ENCODE measurements at regions of chr7 and their contacts with region 1.

Region 1: GRCh38 chr7:102061981-102062390 is 224.7 kb upstream of the SH2B2 start:
- DNase-seq: peak; percentile 57
- ATAC-seq: peak; percentile 94
- H3K4me3 Mint-ChIP-seq: peak overlapping the region; percentile 61
- H3K27ac Mint-ChIP-seq: peak overlapping the region; percentile 81
- H3K4me1 Mint-ChIP-seq: peaks cover 28% of the 10 kb centered on the region
- H3K27me3 Mint-ChIP-seq: no peaks in the 10 kb centered on the region
- CTCF ChIP-seq: no peak

Region 2: DNA sequence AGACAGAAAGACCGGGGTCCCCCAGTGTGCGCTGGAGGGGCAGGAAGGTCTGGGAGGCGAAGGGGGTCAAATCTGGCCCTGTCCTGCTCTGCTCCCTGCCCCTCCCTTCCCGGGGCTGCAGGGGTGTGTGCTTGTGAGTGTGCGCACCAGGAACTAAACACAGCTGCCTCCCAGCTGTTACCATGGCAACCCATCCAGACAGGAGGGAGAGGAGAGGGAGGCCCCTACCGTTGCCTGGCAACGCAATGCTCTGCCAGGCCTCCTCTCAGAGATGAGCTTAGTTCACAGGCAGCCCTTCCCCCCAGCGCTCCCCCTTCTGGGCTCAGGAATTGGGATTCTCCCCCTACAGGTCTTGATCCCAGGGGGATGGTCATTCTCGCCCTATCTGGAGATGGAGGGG is 1572.2 kb before region 1 on chr7:
- CTCF ChIA-PET with region 1: no interaction called
- POLR2A ChIA-PET with region 1: no interaction called
- intact Hi-C with region 1: no loop called
- DNase-seq: no peak
- ATAC-seq: peak; percentile 35
- H3K4me3 Mint-ChIP-seq: no peak overlapping the region
- H3K27ac Mint-ChIP-seq: no peak overlapping the region
- H3K4me1 Mint-ChIP-seq: peaks cover 6% of the 10 kb centered on the region
- H3K27me3 Mint-ChIP-seq: peaks cover 26% of the 10 kb centered on the region
- CTCF ChIP-seq: no peak

Region 3: GRCh38 chr7:101856473-101857357 is 205.3 kb before region 1 on chr7:
- CTCF ChIA-PET with region 1: no interaction called
- POLR2A ChIA-PET with region 1: interaction called, 5 read pairs
- intact Hi-C with region 1: loop called (anchors 1 kb)
- DNase-seq: peak; percentile 76
- ATAC-seq: peak; percentile 86
- H3K4me3 Mint-ChIP-seq: peak overlapping the region; percentile 92
- H3K27ac Mint-ChIP-seq: peak overlapping the region; percentile 98
- H3K4me1 Mint-ChIP-seq: peaks cover 74% of the 10 kb centered on the region
- H3K27me3 Mint-ChIP-seq: no peaks in the 10 kb centered on the region
- CTCF ChIP-seq: no peak

Region 4: DNA sequence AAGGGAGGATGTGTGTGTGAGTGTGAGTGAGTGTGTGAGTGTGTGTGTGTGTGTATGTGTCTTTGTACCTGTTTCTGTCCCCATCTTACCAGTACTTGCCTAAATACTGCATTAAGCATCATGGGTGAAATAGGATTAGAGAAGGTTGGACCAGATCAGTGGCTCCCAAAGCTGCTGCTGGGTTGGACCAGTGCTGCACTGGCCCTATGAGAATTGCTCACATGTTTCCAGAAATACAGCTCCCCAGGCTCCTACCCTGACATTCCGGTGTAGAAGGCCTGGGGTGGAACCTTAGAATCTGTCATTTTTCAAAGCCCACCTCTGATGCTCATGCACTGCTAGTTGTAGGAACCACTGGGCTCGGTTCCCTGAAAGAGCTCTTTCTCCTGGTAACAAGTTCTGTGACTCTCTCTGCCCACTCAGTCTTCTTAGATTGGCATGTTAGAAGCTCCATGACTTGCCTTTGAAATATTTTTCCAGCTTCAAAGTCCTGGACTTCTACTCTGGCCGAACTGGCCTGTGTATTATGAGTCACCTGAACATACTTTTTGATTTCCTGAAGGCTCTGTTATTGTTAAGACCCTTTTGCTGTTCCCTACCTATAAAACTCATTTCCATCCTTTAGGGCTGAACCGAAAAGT is 19.9 kb before region 1 on chr7:
- CTCF ChIA-PET with region 1: no interaction called
- POLR2A ChIA-PET with region 1: interaction called, 3 read pairs
- intact Hi-C with region 1: loop called (anchors 2 kb)
- DNase-seq: no peak
- ATAC-seq: no peak
- H3K4me3 Mint-ChIP-seq: no peak overlapping the region
- H3K27ac Mint-ChIP-seq: no peak overlapping the region
- H3K4me1 Mint-ChIP-seq: peaks cover 29% of the 10 kb centered on the region
- H3K27me3 Mint-ChIP-seq: no peaks in the 10 kb centered on the region
- CTCF ChIP-seq: no peak

Region 5: DNA sequence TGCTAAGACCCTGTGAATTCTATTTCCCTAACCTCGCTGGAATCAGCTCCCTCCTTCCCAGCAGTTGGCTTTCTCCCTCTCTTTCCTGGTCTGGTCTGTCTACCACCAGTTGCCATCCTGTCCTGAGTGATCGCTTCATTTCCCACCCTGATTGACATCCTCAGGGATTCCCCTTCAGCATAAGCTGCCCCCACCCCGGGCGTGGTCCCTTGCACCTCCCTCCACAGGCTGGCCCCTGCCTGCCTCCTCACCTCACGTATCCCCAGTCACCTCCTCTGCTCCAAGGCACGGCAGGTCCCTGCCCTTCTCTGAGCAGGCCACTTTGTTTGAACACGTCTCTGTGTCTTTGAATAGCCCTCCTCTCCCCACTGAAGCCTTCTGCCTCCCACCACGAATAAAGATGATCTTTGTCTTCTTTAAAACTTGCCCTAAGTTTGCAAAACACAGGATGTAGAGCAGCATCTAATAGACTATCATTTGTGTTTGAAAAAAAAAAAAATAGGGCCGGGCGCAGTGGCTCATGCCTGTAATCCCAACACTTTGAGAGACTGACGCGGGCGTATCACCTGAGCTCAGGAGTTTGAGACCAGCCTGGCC is 11.0 kb before region 1 on chr7:
- CTCF ChIA-PET with region 1: no interaction called
- POLR2A ChIA-PET with region 1: interaction called, 4 read pairs
- intact Hi-C with region 1: loop called (anchors 1 kb)
- DNase-seq: no peak
- ATAC-seq: no peak
- H3K4me3 Mint-ChIP-seq: no peak overlapping the region
- H3K27ac Mint-ChIP-seq: no peak overlapping the region
- H3K4me1 Mint-ChIP-seq: peaks cover 44% of the 10 kb centered on the region
- H3K27me3 Mint-ChIP-seq: no peaks in the 10 kb centered on the region
- CTCF ChIP-seq: no peak

Region 6: GRCh38 chr7:102125127-102125561 is 63.2 kb after region 1 on chr7:
- CTCF ChIA-PET with region 1: no interaction called
- POLR2A ChIA-PET with region 1: no interaction called
- intact Hi-C with region 1: loop called (anchors 2 kb)
- DNase-seq: peak; percentile 28
- ATAC-seq: peak; percentile 86
- H3K4me3 Mint-ChIP-seq: no peak overlapping the region
- H3K27ac Mint-ChIP-seq: peak overlapping the region; percentile 41
- H3K4me1 Mint-ChIP-seq: peaks cover 21% of the 10 kb centered on the region
- H3K27me3 Mint-ChIP-seq: no peaks in the 10 kb centered on the region
- CTCF ChIP-seq: no peak

Measured in activated B cell treated with CpG ODN at 0.5 μM for 24 hours (primary cell).